Endothelial cell of umbilical vein (primary cell): ENCODE measurements at regions of chr12 and their contacts with region 1.

Region 1: DNA sequence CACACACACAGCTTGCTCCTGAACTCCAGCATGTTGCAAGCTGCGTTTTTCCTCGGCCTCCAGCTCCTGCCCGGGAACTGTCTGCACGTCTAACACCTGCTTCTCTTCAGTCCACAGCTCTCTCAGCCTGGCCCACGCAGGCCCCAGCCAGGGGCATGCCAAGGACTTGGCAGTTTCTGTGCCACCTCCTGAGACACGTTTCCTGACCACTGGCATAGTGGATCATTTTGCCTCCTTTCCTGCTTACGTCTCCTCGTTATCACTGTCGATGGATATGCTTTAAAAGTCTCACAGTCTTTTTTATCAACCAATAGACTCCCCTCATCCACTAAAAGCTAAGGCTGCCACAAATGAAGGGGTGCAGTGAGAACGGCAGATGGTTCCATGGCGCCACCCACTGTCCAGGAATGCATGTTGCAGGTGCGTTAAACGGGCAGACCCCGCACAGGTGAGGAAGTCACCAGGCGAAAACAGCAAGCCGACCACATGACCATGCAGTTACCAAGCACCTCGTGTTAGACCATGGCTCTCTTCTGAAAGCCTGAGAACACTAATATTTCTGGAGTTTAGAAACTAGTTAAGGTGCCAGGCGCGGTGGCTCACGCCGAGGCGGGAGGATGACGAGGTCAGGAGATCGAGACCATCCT is 14.7 kb upstream of the TEAD4 start:
- DNase-seq: peak; percentile 51
- H3K4me3 ChIP-seq: peak overlapping the region in 1 of 3 experiments; percentile 25
- H3K27ac ChIP-seq: no peak overlapping the region
- H3K4me1 ChIP-seq: peaks cover 3% of the 10 kb centered on the region
- H3K27me3 ChIP-seq: no peaks in the 10 kb centered on the region
- CTCF ChIP-seq: peak; percentile 67 to 84
- POLR2A ChIP-seq: no peak

Region 2: DNA sequence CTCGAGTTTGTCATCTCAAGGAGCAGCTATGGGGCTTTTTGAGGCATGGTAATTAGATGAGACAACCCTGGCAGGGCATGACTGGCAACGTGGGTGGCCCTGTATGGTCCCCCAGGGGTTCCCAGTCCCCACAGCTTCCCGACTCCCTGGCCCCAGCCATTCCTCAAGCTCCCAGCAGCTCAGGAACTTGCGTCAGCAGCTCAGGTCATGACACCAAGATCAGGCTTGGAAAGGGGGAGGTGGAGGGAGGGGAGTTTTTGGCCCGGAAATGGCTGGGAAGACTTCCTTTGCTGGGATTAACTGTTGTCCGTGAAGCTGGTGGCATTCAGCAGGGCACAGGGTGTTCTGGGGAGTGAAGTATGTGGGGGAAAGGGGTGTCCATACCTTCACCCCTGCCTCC is 99.2 kb before region 1 on chr12:
- CTCF ChIA-PET with region 1: interaction called, 15 read pairs
- POLR2A ChIA-PET with region 1: no interaction called
- dilution Hi-C with region 1: no loop called
- intact Hi-C with region 1: no loop called
- DNase-seq: peak; percentile 74
- H3K4me3 ChIP-seq: no peak overlapping the region
- H3K27ac ChIP-seq: peak overlapping the region; percentile 75
- H3K4me1 ChIP-seq: peaks cover 23% of the 10 kb centered on the region
- H3K27me3 ChIP-seq: no peaks in the 10 kb centered on the region
- CTCF ChIP-seq: no peak
- POLR2A ChIP-seq: peak; percentile 65

Region 3: DNA sequence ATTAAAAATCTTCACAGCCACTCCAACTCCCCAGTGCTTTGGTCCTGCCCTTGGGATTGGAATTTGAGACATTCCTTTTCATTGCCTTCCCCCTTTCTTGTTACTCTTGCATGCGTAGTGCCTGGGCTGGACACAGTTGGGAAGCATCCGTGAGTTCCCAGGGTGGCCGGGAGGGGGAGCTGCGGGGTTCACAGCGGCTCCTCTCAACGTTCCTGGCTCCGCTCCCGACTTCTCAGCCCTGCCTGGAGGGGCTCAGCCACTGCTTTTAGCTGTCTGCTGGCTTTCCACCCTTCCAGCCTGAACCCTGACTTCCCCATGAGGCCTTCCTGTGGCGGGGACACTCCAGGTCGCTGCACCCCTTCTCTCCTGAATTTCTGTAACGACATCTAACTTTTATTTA is 90.9 kb before region 1 on chr12:
- CTCF ChIA-PET with region 1: interaction called, 29 read pairs
- POLR2A ChIA-PET with region 1: no interaction called
- dilution Hi-C with region 1: no loop called
- intact Hi-C with region 1: loop called (anchors 1 kb)
- DNase-seq: peak; percentile 69
- H3K4me3 ChIP-seq: no peak overlapping the region
- H3K27ac ChIP-seq: no peak overlapping the region
- H3K4me1 ChIP-seq: peaks cover 4% of the 10 kb centered on the region
- H3K27me3 ChIP-seq: no peaks in the 10 kb centered on the region
- CTCF ChIP-seq: peak; percentile 92 to 96
- POLR2A ChIP-seq: no peak

Region 4: GRCh38 chr12:2884810-2885209 is 59.7 kb before region 1 on chr12:
- CTCF ChIA-PET with region 1: interaction called, 45 read pairs
- POLR2A ChIA-PET with region 1: no interaction called
- dilution Hi-C with region 1: no loop called
- intact Hi-C with region 1: loop called (anchors 2 kb)
- DNase-seq: no peak
- H3K4me3 ChIP-seq: no peak overlapping the region
- H3K27ac ChIP-seq: no peak overlapping the region
- H3K4me1 ChIP-seq: no peaks in the 10 kb centered on the region
- H3K27me3 ChIP-seq: no peaks in the 10 kb centered on the region
- CTCF ChIP-seq: no peak
- POLR2A ChIP-seq: no peak

Region 5: GRCh38 chr12:2890388-2891239 is 53.9 kb before region 1 on chr12 and contains the start of gene TULP3:
- CTCF ChIA-PET with region 1: interaction called, 45 read pairs
- POLR2A ChIA-PET with region 1: no interaction called
- dilution Hi-C with region 1: no loop called
- intact Hi-C with region 1: loop called (anchors 2 kb)
- DNase-seq: peak; percentile 99
- H3K4me3 ChIP-seq: peak within 1 kb of the TSS; percentile 32 to 76 (median 75)
- H3K27ac ChIP-seq: peak within 1 kb of the TSS; percentile 59
- H3K4me1 ChIP-seq: peaks cover 11% of the 10 kb centered on the region
- H3K27me3 ChIP-seq: no peaks in the 10 kb centered on the region
- CTCF ChIP-seq: peak in 1 of 2 donors; percentile 18
- POLR2A ChIP-seq: peak; percentile 86
- total RNA-seq, gene TULP3: 30.8 and 32.9 TPM in 2 replicates

Region 6: DNA sequence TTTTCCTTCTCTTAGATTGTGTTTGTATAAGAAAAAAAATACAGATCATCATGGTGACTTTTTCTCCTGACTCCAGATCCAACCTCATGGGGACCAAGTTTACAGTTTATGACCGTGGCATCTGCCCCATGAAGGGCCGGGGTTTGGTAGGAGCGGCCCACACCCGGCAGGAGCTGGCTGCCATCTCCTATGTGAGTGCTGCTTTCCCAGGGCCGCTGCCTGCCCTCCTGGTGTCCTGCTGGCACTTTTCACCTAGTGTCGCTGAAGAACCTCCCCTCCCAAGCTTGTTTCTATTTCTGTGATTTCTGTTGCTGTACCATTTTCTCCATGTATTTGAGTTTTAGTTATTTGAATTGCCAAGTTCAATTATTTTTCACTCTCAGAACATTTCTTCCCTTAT is 10.2 kb before region 1 on chr12:
- CTCF ChIA-PET with region 1: interaction called, 12 read pairs
- POLR2A ChIA-PET with region 1: no interaction called
- dilution Hi-C with region 1: no loop called
- intact Hi-C with region 1: no loop called
- DNase-seq: no peak
- H3K4me3 ChIP-seq: no peak overlapping the region
- H3K27ac ChIP-seq: no peak overlapping the region
- H3K4me1 ChIP-seq: peaks cover 7% of the 10 kb centered on the region
- H3K27me3 ChIP-seq: no peaks in the 10 kb centered on the region
- CTCF ChIP-seq: no peak
- POLR2A ChIP-seq: no peak